CD4-positive, alpha-beta memory T cell (primary cell): ENCODE measurements at regions of chr5 and their contacts with region 1.

Region 1: DNA sequence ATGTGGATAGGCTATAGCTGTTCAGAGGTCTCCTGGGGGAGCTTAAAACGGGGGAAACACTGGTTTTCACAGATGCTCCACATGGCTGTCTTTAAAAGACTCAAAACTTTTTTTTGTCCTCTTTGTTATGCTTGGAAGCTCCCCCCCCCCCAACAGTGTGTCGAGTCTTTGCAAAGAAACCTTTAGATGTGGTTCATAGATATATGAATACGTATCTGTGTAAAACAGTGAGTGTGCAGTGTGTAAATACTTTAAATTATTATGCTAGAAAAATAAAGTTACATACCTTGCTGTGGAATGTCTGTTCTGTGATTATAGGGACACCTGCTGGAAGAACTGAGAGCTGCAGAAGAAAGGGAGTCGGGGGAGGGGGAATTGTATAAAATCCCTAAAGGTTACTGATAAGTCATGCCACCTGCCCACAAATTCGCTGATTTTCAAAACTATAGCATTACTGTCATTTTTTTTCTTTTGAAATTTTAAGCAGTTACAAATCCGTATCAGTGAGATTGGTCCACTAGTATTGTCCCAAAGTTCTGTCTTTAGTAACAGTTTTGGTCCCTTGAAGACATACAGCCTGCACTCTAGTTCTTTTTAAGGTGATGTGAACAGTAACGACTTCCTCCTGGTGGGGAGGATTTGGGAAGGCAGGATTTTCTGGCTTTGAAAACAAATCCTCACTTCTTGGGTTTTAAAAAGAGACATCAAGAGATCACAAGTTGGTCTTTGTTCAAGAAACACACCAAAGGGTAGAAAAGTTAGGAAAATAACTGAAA is 22.9 kb downstream of the RGMB start:
- DNase-seq: peak; percentile 40 to 61 (median 56)
- H3K4me3 ChIP-seq: no peak overlapping the region
- H3K4me3 Mint-ChIP-seq: no peak overlapping the region
- H3K27ac ChIP-seq: no peak overlapping the region
- H3K27ac Mint-ChIP-seq: peak overlapping the region in 1 of 7 donors; percentile 62
- H3K4me1 ChIP-seq: no peaks in the 10 kb centered on the region
- H3K4me1 Mint-ChIP-seq: peaks cover 0 to 6% (median under 1%) of the 10 kb centered on the region in 4 donors
- H3K27me3 ChIP-seq: no peaks in the 10 kb centered on the region
- H3K27me3 Mint-ChIP-seq: no peaks in the 10 kb centered on the region

Region 2: DNA sequence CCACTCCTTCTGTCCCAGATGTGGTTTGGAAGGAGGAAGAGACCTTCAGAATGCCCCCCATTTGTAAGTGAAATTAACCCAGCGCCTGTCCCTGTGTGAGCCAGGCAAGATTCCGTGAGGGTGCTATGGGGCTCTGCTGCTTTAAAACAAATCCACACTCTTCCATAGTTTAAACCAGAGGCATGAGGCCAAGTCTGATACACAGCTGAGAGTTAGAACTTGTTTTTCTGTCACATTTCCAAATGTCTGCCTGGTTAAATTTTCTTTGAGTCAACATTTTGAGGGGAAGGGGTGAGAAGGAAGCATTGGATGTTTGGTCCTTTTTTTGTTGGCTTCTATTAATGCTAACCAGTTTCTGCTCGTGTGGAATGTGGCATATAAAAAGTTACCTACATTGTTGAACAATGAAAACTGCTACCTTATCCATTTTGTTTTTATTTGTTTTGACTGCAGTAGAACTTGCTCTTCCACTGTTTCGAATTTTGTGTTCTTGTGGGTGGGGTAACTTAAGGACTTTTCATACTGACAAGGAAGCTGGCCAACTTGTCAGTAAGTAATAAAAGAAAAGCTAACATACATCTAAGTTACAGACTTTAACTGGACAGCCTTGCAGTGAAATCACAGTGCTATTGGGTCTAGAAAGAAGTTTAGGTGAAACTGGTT is 10.1 kb before region 1 on chr5:
- CTCF ChIA-PET with region 1: interaction called, 13 read pairs
- POLR2A ChIA-PET with region 1: no interaction called
- intact Hi-C with region 1: no loop called
- DNase-seq: no peak
- H3K4me3 ChIP-seq: no peak overlapping the region
- H3K4me3 Mint-ChIP-seq: no peak overlapping the region
- H3K27ac ChIP-seq: no peak overlapping the region
- H3K27ac Mint-ChIP-seq: peak overlapping the region in 1 of 7 donors; percentile 71
- H3K4me1 ChIP-seq: no peaks in the 10 kb centered on the region
- H3K4me1 Mint-ChIP-seq: peaks cover 4 to 53% (median 21%) of the 10 kb centered on the region in 4 donors
- H3K27me3 ChIP-seq: no peaks in the 10 kb centered on the region
- H3K27me3 Mint-ChIP-seq: peaks cover 0 to 1% of the 10 kb centered on the region in 2 donors

Region 3: GRCh38 chr5:98880151-98880550 is 83.8 kb after region 1 on chr5:
- CTCF ChIA-PET with region 1: no interaction called
- POLR2A ChIA-PET with region 1: no interaction called
- intact Hi-C with region 1: no loop called
- DNase-seq: no peak
- H3K4me3 ChIP-seq: no peak overlapping the region
- H3K4me3 Mint-ChIP-seq: no peak overlapping the region
- H3K27ac ChIP-seq: no peak overlapping the region
- H3K27ac Mint-ChIP-seq: peak overlapping the region in 3 of 7 donors; percentile 10 to 74 (median 19)
- H3K4me1 ChIP-seq: no peaks in the 10 kb centered on the region
- H3K4me1 Mint-ChIP-seq: peaks cover 4 to 9% (median 6%) of the 10 kb centered on the region in 4 donors
- H3K27me3 ChIP-seq: no peaks in the 10 kb centered on the region
- H3K27me3 Mint-ChIP-seq: no peaks in the 10 kb centered on the region